Tibial artery (tissue), 4 donors: ENCODE measurements at regions of chr12 and their contacts with region 1.

Region 1: DNA sequence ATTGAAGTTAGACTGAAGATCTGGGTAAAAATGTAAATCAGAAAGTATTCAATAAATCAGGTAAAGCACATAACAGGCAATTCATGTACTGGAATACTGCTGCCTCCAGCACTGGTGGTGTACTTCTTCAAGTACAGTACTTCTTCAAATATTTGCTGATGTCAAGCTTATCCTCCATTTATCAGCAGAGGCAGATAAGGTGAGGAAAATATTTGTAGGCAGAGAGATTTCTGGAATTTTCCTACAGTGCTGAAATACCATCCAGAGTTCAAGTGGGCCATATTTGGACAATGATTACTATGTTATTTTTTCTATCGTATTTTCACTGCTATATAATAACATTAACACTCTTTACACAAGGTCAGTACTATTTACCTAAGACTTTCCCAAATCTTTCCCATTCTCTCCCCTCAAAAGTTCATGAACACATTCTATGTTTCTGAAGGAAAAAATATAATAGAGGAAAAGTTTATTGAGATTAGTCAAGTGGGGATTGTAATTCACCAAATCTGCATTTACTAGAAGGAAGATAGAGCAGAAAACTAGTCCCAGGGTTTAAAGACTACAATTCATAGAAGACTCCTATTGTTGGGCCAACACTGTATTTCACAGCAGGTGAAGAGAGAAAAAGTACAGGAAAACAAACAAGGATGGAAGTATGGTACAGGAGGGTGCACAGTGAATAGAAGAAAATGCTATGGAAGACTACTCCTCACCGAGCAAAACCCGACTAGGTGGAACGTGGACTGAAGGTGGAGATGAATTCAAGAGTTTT is 141.1 kb downstream of the PAWR start:
- DNase-seq: no peak
- H3K4me3 ChIP-seq: no peak overlapping the region
- H3K27ac ChIP-seq: peak overlapping the region in 1 of 2 donors; percentile 70
- H3K4me1 ChIP-seq: peaks cover 6 to 76% (median 58%) of the 10 kb centered on the region in 4 donors
- H3K27me3 ChIP-seq: no peaks in the 10 kb centered on the region
- CTCF ChIP-seq: no peak

Region 2: DNA sequence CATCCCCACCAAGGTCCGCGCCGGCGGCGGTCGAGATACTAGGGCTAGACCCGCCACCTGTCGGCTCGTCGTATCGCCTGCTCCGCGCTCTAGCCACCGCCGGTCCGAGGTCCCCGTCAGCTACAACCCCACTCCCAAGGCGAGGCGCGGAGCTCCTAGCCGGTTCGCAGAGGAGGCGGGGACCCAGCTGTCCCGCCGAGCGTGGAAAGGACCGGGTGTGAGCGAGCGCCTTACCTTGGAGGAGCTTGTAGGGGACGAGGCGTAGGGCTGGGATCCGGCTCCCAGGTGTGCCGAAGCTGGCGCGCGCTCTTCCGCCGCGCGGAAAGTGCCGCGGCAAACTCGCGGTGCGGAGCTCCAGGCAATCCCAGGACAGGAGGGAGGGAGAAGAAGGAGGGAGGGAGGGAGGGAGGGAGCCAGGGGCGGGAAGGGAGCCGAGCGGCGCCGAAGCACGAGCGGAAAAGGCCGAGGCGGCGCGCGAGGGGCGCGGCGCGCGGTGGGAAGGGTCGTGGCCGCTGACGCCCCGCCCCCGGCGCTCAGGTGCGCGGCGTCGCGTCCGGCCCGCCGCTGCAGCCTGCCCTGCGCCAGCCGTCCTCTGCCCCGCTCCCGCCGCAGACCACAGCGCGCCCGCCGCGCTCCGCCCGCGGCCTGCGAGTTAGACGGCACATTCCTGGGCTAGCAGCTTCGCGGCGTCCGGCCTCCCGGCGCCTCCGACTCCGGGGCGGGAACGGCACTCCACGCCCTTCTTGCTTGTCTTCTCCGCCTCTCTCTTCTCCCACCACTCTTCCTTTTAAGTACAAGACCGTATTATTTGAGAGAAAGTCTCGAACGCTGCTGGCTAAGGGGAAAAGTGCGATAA is 141.2 kb after region 1 on chr12 and contains the start of gene PAWR:
- intact Hi-C with region 1: loop called (anchors 5 kb)
- DNase-seq: peak; percentile 57 to 82
- H3K4me3 ChIP-seq: peak within 1 kb of the TSS; percentile 93 to 97
- H3K27ac ChIP-seq: peak within 1 kb of the TSS; percentile 98
- H3K4me1 ChIP-seq: peaks cover 0 to 27% (median 6%) of the 10 kb centered on the region in 4 donors
- H3K27me3 ChIP-seq: no peaks in the 10 kb centered on the region
- CTCF ChIP-seq: peak in 1 of 2 experiments; percentile 30

Region 3: GRCh38 chr12:80195074-80195726 is 645.5 kb after region 1 on chr12:
- intact Hi-C with region 1: loop called (anchors 5 kb)
- DNase-seq: no peak
- H3K4me3 ChIP-seq: no peak overlapping the region
- H3K27ac ChIP-seq: no peak overlapping the region
- H3K4me1 ChIP-seq: peaks cover 0 to 10% (median 6%) of the 10 kb centered on the region in 4 donors
- H3K27me3 ChIP-seq: no peaks in the 10 kb centered on the region
- CTCF ChIP-seq: peak; percentile 41 to 46